Right ventricle myocardium superior (tissue), 1 donor: ENCODE measurements at regions of chr11 and their contacts with region 1.

Region 1: DNA sequence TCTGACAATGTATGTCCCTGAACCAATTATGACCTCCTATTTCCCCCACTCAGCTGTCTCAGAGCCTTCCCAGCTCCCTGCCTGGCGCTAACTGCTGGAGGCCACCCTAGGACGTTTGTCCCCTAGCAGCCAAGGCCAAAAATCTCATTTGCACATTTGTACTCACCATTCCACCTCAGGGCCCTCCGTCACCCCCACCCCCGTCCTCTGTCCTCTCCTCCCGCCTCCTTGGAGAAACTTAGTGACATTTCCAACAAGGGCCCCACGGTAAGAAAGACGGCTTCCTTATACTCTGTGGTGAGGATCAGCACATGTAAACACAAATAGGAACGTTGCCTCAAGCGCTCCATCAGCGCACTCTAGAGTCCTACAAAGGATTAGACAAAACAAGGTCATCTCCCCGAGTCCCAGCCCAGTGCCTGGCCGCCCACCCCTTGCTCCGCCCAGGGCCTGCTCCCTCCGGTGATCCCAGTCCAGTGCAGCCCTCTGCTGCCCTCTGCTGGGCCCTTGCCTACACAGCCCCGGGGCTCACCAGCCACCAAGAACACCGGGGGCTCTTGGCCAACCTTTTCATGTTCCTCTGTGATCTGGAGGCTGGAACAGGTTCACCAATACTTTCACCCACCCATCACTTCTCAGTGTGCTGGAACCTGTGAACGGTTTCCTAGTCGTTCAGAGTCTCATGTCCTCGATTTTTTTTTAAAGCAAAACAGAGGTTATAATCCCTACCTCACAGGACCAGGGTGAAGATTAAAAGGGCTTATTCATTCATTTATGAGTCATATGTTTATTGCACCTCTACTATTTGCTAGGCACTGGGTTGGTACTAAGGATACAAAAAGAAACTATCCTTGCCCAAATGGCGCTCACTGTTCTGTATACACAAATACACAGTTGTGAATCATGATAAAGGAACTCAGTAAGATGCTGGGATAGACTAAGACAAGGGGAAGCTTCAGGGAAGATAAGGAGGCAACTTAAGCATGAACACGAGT is 15.3 kb upstream of the CTR9 start:
- DNase-seq: peak; percentile 97
- ATAC-seq: peak; percentile 100

Region 2: DNA sequence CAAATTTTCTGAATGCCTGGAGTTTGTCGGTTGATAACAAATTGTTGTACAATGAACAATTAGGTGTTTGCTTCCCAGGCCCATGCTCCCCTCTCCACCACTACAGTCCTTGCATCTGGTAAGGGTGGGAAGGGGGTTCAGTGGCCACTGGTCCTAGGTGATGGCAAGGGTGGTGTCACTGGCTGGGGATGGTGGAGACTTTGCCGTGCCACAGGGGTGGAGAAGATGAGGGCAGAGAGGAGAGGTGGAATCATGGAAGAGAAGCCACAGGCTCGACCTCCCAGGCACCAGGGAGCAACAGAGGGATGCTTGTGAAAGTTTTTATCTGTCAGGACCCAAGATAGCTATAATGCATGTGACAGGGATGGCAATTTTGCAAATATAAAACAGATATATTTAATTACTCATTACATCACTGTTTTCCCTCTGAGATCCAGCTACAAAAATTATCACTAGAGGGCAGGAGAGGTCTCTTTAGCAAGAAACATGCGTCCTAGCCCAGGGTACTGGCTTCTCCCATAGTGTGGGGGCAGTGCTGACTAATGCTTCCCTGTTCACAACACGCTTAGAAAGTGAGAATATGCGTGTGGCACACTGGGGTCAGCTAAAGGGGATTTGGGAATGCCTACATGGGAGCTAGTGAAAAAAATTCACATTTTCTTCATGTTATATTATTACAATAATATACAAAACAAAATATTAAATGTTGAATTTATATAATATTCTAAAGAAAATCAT is 329.8 kb before region 1 on chr11:
- intact Hi-C with region 1: loop called (anchors 2 kb)
- DNase-seq: peak; percentile 69
- ATAC-seq: peak; percentile 92

Region 3: GRCh38 chr11:10514210-10514609 is 221.6 kb before region 1 on chr11:
- intact Hi-C with region 1: loop called (anchors 10 kb)
- DNase-seq: no peak
- ATAC-seq: no peak

Region 4: DNA sequence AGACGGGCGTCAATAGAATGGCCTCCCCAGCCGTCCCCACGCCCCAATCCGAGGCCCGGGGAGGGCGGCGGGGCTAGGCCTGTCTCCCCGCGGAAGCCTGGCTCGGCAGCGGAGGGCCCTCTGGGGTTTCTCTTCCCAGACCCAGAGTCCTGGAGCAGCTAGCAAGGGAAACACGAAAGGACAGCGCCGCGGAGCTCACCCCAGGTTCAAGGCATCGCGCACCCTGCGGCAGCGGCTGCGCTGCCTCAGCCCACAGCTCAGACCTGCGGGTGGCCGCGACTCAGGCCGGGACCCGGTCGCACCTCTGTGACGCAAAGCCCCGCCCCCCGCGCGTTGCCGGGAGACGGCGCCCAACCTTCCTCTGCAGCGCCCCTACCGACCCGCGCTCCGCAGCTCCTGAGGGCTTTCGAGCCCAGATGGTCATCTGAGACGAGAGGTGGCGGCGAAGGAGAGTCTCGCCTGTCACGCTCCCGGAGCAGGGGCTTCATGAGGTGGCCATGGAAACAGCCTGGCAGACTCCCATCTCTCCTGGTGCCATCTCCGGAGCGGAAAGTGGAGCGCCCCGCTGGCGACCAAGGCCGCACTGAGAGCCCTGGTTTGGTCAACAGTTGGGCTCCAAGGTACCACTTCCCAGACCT is 194.7 kb before region 1 on chr11 and contains the start of gene RNF141:
- intact Hi-C with region 1: loop called (anchors 10 kb)
- DNase-seq: peak; percentile 98
- ATAC-seq: peak; percentile 100
- total RNA-seq, gene RNF141: 41.4 TPM

Region 5: GRCh38 chr11:10628508-10629236 is 107.1 kb before region 1 on chr11:
- intact Hi-C with region 1: loop called (anchors 5 kb)
- DNase-seq: no peak
- ATAC-seq: no peak